ENCODE measurements at regions of chr1 and their contacts with region 1.

Region 1: GRCh38 chr1:9724706-9725476 is 73.4 kb downstream of the PIK3CD start:
- DNase-seq: peak; percentile 52 to 86 (median 68)
- ATAC-seq: peak; percentile 50
- H3K4me3 ChIP-seq: no peak overlapping the region
- H3K4me3 Mint-ChIP-seq: peak overlapping the region; percentile 35
- H3K27ac ChIP-seq: peak overlapping the region in 1 of 2 donors; percentile 34
- H3K27ac Mint-ChIP-seq: peak overlapping the region; percentile 84
- H3K4me1 ChIP-seq: peaks cover 92% of the 10 kb centered on the region
- H3K4me1 Mint-ChIP-seq: peaks cover 58% of the 10 kb centered on the region
- H3K27me3 ChIP-seq: no peaks in the 10 kb centered on the region
- H3K27me3 Mint-ChIP-seq: no peaks in the 10 kb centered on the region
- CTCF ChIP-seq: peak; percentile 92

Region 2: DNA sequence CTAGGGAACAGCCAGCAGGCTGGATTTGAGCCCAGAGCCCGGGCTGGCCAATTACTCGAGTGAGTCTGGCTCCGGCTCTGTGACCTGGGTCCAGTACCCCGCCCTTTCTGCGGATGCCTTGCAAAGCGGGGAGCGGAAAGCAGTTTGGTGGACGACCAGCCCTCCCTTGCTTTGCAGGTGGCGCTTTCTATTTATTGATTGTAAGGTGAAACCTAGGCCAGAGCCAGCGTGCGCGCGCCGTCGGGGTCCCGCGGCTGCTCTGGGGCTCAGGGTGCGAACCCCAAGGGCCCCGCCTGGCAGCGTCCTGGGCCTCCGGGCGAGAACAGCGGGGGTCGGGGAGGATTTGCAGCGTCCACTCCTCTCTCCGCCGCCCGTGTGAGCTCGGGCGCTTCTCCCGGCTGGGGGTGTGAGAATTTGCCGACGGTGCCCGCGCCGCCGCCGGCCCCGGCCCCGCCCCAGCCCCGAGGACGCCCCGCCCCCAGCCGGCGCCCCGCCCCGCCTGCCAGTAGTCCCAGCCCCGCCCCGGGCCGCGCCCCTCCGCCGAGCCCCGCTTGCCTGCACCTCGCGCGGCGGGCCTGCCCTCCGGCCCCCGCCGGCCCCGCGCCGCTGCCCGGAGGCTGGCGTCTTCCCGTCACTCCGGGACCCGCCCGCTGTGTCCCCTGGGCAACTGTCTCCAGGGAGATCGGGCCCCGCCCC is 35.7 kb before region 1 on chr1:
- CTCF ChIA-PET with region 1: interaction called, 7 read pairs
- POLR2A ChIA-PET with region 1: interaction called, 98 read pairs
- intact Hi-C with region 1: loop called in 1 of 2 experiments (anchors 5 kb)
- DNase-seq: peak; percentile 76 to 92 (median 83)
- ATAC-seq: peak; percentile 78
- H3K4me3 ChIP-seq: peak overlapping the region; percentile 61
- H3K4me3 Mint-ChIP-seq: peak overlapping the region; percentile 88
- H3K27ac ChIP-seq: peak overlapping the region in 1 of 2 donors; percentile 40
- H3K27ac Mint-ChIP-seq: peak overlapping the region; percentile 74
- H3K4me1 ChIP-seq: peaks cover 76% of the 10 kb centered on the region
- H3K4me1 Mint-ChIP-seq: peaks cover 76% of the 10 kb centered on the region
- H3K27me3 ChIP-seq: no peaks in the 10 kb centered on the region
- H3K27me3 Mint-ChIP-seq: no peaks in the 10 kb centered on the region
- CTCF ChIP-seq: no peak

Region 3: DNA sequence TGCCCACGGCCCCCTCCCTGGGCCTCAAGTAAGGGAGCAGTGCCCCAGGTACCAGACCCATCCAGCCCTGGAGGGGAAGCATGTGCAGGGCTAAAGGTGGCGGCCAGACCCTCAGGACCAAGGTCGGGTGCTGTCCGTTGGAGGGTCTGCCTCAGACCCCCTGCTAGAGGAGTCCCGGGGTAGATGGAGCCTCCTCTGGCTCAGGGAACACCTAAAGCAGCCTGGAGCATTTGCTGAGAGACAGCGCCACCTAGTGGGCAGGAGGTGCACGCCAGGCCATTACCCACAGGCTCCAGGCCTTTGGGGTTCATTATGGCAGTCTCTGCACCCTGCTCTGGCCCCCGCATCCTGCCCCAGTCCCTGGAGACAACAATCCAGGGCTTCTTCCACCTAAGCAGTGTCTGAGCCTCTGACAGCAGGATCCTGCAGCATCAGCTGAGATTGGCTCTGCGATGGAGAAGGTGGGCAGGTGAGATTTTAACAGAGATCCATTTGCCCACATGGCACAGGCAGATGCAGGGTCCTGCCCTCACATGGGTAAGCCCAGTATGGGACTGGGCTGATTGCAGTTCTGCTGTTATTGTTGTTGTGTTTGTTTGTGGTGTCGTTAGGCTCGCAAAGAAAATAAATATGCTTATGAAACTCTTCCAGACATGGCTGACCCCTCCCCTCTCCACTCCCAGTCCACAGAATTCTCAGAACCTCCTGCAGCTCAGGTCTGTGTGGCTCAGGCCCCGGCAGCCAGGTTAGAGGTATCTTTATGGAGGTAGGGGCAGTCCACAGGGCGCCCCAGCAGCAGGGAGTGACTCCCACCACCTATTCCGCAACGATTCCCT is 142.7 kb after region 1 on chr1:
- CTCF ChIA-PET with region 1: interaction called, 4 read pairs
- POLR2A ChIA-PET with region 1: no interaction called
- intact Hi-C with region 1: loop called (anchors 5 kb)
- DNase-seq: peak; percentile 80 to 94 (median 88)
- ATAC-seq: peak; percentile 100
- H3K4me3 ChIP-seq: no peak overlapping the region
- H3K4me3 Mint-ChIP-seq: no peak overlapping the region
- H3K27ac ChIP-seq: no peak overlapping the region
- H3K27ac Mint-ChIP-seq: no peak overlapping the region
- H3K4me1 ChIP-seq: peaks cover 10% of the 10 kb centered on the region
- H3K4me1 Mint-ChIP-seq: peaks cover 5% of the 10 kb centered on the region
- H3K27me3 ChIP-seq: no peaks in the 10 kb centered on the region
- H3K27me3 Mint-ChIP-seq: no peaks in the 10 kb centered on the region
- CTCF ChIP-seq: peak; percentile 94

Region 4: DNA sequence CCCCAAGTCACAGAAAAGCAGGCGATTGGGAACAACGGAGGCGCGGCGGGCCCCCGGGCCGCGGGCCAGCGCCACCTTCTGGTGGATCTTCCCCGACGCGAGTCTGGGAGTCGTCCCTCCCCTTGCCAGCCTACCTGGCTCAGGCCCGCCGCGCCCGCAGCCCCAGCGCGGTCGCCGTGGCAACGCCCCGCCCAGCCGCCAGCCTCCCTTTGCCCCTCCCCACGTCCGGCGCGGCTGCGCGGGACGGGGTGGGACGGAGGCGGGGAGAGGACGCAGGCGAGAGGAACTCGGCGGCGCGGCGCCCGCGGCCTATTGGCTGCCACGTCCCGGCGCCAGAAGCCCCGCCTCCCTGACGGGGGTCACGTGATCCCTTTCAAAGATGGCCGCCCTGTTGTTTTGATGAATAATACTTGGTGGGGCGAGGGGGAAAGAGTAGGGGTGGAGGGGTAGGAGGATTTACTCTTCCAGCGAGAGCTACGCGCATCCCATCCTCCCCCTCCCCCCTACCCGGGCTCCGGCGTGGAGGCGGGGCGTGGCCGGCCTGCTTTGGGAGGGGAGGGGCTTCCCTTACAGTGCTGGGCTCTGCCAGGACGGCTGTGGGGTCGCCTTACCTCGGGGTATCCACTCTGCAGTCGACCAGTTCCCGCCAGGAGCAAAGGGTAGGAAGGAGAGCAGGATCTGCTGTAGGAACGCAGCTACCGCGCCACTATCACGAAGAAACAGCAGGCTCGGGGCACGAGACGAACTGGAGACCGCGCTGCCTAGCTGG is 307.9 kb after region 1 on chr1 and contains the start of gene UBE4B:
- CTCF ChIA-PET with region 1: no interaction called
- POLR2A ChIA-PET with region 1: no interaction called
- intact Hi-C with region 1: no loop called
- DNase-seq: peak; percentile 96 to 100 (median 99)
- ATAC-seq: peak; percentile 93
- H3K4me3 ChIP-seq: peak within 1 kb of the TSS; percentile 99
- H3K4me3 Mint-ChIP-seq: peak within 1 kb of the TSS; percentile 98
- H3K27ac ChIP-seq: peak within 1 kb of the TSS; percentile 91 to 95
- H3K27ac Mint-ChIP-seq: peak within 1 kb of the TSS; percentile 99
- H3K4me1 ChIP-seq: peaks cover 28% of the 10 kb centered on the region
- H3K4me1 Mint-ChIP-seq: peaks cover 30% of the 10 kb centered on the region
- H3K27me3 ChIP-seq: no peaks in the 10 kb centered on the region
- H3K27me3 Mint-ChIP-seq: no peaks in the 10 kb centered on the region
- CTCF ChIP-seq: peak; percentile 74
- total RNA-seq, gene UBE4B: 27.9 to 28.7 TPM

Measured in CD4-positive, alpha-beta T cell (primary cell).